ENCODE measurements at regions of chr9 and their contacts with region 1.

Region 1: DNA sequence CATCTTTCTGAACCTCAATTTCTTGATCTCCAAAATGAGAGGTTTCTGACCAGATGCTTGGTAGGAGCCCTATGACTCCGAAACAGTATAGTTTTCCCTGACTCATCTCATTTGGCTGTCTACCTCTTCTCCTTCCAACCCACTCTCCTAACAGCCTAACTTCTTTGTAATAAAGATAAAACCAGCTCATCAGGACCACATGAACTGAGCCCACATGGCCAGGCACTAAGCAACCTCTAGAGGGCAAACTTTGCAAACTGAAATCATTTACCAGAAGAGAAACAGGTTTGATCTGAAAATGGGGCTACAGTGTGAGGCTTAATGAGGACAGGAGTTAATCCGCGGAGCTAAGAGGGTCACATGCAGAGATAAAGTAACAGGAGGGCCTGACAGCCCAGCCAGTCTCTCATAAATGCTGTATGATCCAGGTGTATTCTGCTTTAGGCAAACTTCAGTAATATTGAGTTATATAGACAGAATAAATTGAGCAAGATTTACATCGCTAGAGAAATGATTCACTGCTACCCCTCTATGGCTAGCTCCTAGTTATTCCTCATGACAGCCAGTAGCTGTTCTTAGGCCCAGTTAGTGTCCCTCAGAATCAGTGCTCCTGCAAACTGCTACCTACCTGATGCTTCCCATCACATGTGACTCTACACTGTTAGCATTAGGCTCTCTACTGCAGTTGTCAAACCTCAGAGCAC is 64.6 kb downstream of the ABCA1 start:
- DNase-seq: no peak
- H3K4me3 ChIP-seq: no peak overlapping the region
- H3K27ac ChIP-seq: no peak overlapping the region
- H3K4me1 ChIP-seq: peaks cover 6 to 16% of the 10 kb centered on the region in 2 donors
- H3K27me3 ChIP-seq: no peaks in the 10 kb centered on the region
- CTCF ChIP-seq: peak; percentile 46 to 62 (median 61)

Region 2: GRCh38 chr9:104968025-104968982 is 105.0 kb after region 1 on chr9:
- intact Hi-C with region 1: loop called (anchors 5 kb)
- DNase-seq: peak; percentile 41 to 95
- H3K4me3 ChIP-seq: peak overlapping the region; percentile 69 to 78
- H3K27ac ChIP-seq: peak overlapping the region; percentile 86 to 94
- H3K4me1 ChIP-seq: peaks cover 0 to 4% of the 10 kb centered on the region in 2 donors
- H3K27me3 ChIP-seq: no peaks in the 10 kb centered on the region
- CTCF ChIP-seq: no peak

Region 3: DNA sequence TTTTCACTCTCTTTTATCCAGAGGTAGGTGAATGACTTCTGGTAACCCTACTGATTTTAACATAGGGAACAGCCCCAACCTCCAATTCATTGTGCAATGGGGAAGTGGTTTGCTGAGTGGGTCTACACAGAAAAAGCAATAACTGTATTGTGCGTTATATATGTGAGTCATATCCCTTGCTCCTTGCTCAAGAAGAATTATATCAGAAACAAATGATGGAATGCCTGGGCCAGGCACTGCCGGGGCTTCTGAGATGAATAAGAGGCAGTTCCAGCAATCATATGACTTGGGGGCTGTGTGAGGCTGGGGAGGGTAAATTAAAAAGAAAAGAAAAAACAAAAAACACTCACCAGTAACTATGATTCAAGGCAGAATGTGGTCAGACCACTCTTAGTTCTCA is 143.8 kb after region 1 on chr9:
- intact Hi-C with region 1: no loop called
- DNase-seq: peak; percentile 26 to 72
- H3K4me3 ChIP-seq: no peak overlapping the region
- H3K27ac ChIP-seq: peak overlapping the region in 1 of 2 donors; percentile 49
- H3K4me1 ChIP-seq: no peaks in the 10 kb centered on the region
- H3K27me3 ChIP-seq: no peaks in the 10 kb centered on the region
- CTCF ChIP-seq: no peak

Region 4: DNA sequence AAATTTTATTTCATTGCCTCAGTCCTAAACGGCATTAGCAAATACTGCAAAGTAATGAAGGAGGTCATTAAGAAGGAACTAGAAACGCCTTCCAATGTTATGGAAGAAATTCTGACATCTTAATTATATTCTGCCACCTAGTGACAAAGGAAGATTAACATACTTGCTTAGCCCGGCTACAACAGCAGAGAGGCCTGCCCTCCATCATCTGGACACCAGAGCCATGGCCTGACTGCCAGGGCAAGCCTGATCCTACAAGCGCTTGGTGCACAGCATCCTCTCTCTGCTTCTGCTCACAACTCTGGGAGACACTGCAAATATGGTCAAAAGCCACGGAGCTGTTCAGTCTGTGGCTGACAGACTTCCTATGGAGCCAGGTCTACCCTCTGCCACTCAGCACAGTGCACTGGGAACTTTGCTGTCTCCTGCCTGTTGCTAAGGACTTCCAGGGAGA is 293.8 kb after region 1 on chr9:
- intact Hi-C with region 1: loop called (anchors 2 kb)
- DNase-seq: peak in 1 of 2 donors; percentile 74
- H3K4me3 ChIP-seq: no peak overlapping the region
- H3K27ac ChIP-seq: no peak overlapping the region
- H3K4me1 ChIP-seq: no peaks in the 10 kb centered on the region
- H3K27me3 ChIP-seq: no peaks in the 10 kb centered on the region
- CTCF ChIP-seq: peak; percentile 21 to 50 (median 27)